B cell (primary cell): ENCODE measurements at regions of chr18 and their contacts with region 1.

Region 1: DNA sequence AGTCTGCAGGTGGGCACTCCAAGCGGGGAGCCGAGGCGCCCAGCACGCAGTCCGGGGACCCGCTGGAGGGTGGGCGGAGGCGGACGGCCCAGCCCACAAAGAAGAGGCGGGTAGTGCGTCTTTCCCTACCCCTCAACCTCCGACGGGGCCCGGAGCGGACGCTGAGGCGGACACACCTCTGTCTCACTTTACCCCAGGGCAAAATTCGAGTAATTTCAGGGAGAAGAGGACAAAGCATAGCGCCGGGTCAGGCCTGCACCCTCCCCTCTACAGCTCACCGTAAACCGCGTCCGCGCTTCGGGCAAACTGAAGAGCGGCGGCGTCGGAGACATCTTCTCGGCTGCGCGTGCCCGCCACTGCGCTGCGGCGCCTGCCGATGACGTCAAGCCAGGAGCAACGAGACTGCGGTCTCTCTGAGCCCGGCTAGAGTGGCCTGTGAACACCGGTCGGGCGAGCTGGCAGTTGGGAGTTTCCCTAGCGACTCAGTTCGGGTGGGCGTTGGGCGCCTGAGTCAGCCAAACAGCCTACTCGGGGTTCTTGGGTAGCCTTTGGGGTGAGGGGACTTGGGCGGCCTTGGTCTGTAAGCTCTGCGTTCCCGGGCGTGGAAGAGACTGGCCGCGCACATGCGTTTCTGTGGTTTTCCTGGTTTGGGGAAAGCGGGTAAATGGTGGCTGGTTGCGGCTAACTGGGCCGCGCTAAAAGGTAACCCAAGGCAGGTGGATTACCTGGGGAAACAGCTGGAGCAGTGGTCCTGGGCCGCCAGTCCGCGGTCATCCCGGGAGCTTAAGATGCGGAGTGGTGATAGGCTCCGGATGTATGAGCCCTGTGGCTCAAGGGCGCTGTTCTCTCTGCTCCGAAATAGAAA is at the start of gene THOC1:
- DNase-seq: peak; percentile 94
- ATAC-seq: peak; percentile 86
- H3K4me3 ChIP-seq: peak within 1 kb of the TSS; percentile 71 to 100 (median 95)
- H3K4me3 Mint-ChIP-seq: peak within 1 kb of the TSS; percentile 98
- H3K27ac ChIP-seq: peak within 1 kb of the TSS; percentile 84 to 89
- H3K27ac Mint-ChIP-seq: peak within 1 kb of the TSS; percentile 99
- H3K4me1 ChIP-seq: peaks cover 8 to 16% of the 10 kb centered on the region in 2 donors
- H3K4me1 Mint-ChIP-seq: peaks cover 30% of the 10 kb centered on the region
- H3K27me3 ChIP-seq: no peaks in the 10 kb centered on the region
- H3K27me3 Mint-ChIP-seq: no peaks in the 10 kb centered on the region
- CTCF ChIP-seq: no peak
- total RNA-seq, gene THOC1: 78.7 and 83.1 TPM in 2 replicates

Region 2: DNA sequence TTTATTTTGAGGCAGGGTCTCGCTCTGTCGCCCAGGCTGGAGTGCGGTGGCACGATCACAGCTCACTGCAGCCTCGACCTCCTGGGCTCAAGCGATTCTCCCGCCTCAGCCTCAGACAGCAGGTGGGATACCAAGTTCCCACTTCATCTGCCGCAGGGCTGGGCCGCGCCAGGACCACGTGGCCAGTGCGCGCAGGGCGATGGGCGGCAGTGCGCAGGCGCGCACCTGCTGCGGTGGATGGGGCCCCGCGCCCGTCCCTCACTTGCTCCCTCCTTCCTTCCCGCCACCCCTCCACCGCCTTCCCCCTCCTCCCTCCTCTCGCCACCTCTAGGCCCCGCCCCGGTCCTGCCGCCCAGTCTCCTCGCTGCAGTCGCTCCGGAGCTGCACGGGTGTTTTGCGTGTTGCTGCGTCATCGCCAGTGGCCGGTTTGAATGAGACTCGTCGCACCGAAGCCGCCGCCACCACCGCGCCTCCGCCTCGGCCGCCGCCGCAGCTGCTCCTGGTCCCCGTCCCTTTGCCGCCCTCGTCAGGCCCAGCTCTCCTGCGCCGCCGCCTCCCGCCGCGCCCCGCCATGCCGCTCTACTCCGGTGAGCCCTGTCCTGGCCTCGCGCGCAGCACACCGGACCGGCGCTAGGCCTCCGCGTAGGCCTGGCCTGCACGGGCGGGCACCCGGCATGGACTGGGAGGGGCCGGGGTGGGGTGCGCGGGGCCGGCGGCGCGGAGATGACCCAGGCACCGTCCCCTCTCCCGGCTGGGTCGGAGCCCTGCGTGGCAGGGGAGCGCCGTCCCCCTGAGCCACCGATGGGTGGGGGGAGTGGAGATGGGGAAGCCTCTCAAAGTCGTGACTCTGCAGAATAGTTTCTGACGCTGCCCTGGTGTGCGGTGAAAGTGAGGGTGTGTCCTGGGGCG is 109.5 kb before region 1 on chr18 and contains the start of gene USP14:
- CTCF ChIA-PET with region 1: interaction called, 4 read pairs
- POLR2A ChIA-PET with region 1: interaction called, 5 read pairs
- intact Hi-C with region 1: loop called (anchors 1 kb)
- DNase-seq: peak; percentile 97
- ATAC-seq: peak; percentile 94
- H3K4me3 ChIP-seq: peak within 1 kb of the TSS; percentile 45 to 77 (median 60)
- H3K4me3 Mint-ChIP-seq: peak within 1 kb of the TSS; percentile 93
- H3K27ac ChIP-seq: peak within 1 kb of the TSS; percentile 54 to 88
- H3K27ac Mint-ChIP-seq: peak within 1 kb of the TSS; percentile 94
- H3K4me1 ChIP-seq: peaks cover 10 to 12% of the 10 kb centered on the region in 2 donors
- H3K4me1 Mint-ChIP-seq: peaks cover 25% of the 10 kb centered on the region
- H3K27me3 ChIP-seq: no peaks in the 10 kb centered on the region
- H3K27me3 Mint-ChIP-seq: peaks cover 5% of the 10 kb centered on the region
- CTCF ChIP-seq: no peak
- total RNA-seq, gene USP14: 38.9 and 39.9 TPM in 2 replicates

Region 3: DNA sequence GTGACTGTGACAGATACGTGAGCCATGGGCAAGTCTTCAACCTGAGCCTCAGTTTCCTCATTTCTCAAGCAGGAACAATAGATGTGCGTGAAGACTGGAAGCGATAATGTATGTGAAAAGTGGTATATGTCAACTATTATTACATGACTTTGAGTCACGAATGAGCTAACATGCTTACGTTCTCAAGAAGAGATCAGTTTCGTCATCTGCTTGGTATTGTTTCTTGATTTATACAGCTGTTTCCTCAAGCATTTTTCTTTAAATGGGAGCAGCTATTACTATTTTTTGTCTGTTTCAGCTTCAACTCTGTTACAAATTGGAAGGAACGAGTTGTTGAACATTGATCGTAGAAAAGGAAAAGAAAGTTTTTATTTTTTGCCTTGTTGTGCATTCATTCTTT is 48.5 kb after region 1 on chr18:
- CTCF ChIA-PET with region 1: no interaction called
- POLR2A ChIA-PET with region 1: no interaction called
- intact Hi-C with region 1: no loop called
- DNase-seq: no peak
- ATAC-seq: no peak
- H3K4me3 ChIP-seq: no peak overlapping the region
- H3K4me3 Mint-ChIP-seq: no peak overlapping the region
- H3K27ac ChIP-seq: no peak overlapping the region
- H3K27ac Mint-ChIP-seq: no peak overlapping the region
- H3K4me1 ChIP-seq: no peaks in the 10 kb centered on the region
- H3K4me1 Mint-ChIP-seq: no peaks in the 10 kb centered on the region
- H3K27me3 ChIP-seq: no peaks in the 10 kb centered on the region
- H3K27me3 Mint-ChIP-seq: no peaks in the 10 kb centered on the region
- CTCF ChIP-seq: no peak

Region 4: GRCh38 chr18:712401-713134 is 444.6 kb after region 1 on chr18 and contains the start of gene ENOSF1:
- CTCF ChIA-PET with region 1: no interaction called
- POLR2A ChIA-PET with region 1: no interaction called
- intact Hi-C with region 1: loop called (anchors 5 kb)
- DNase-seq: peak; percentile 80
- ATAC-seq: peak; percentile 90
- H3K4me3 ChIP-seq: peak within 1 kb of the TSS; percentile 45 to 78 (median 53)
- H3K4me3 Mint-ChIP-seq: peak within 1 kb of the TSS; percentile 80
- H3K27ac ChIP-seq: peak within 1 kb of the TSS in 1 of 2 donors; percentile 55
- H3K27ac Mint-ChIP-seq: peak within 1 kb of the TSS; percentile 82
- H3K4me1 ChIP-seq: peaks cover 8 to 15% of the 10 kb centered on the region in 2 donors
- H3K4me1 Mint-ChIP-seq: peaks cover 12% of the 10 kb centered on the region
- H3K27me3 ChIP-seq: peaks cover 0 to 15% (median 0%) of the 10 kb centered on the region in 4 experiments
- H3K27me3 Mint-ChIP-seq: peaks cover 4% of the 10 kb centered on the region
- CTCF ChIP-seq: peak; percentile 52
- total RNA-seq, gene ENOSF1: 32.7 and 34.8 TPM in 2 replicates